ENCODE measurements at regions of chr21 and their contacts with region 1.

Region 1: DNA sequence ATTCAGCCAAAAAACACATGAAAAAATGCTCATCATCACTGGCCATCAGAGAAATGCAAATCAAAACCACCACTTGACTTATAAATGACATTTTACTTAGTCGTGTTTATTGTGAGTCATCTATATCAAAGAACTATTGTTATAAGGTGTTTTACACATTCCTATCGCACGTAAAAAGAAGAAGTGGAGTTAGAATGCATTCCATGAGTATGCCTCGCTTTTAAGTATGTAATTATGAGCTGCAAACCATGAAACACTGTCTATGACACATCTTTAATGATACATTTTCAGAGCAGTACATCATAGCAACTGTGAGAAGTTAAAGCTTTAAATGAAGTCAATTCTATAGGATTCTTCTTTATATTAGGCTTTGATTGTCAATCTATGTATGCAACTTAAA is 614.3 kb upstream of the ADAMTS5 start:
- DNase-seq: no peak
- ATAC-seq: no peak

Region 2: DNA sequence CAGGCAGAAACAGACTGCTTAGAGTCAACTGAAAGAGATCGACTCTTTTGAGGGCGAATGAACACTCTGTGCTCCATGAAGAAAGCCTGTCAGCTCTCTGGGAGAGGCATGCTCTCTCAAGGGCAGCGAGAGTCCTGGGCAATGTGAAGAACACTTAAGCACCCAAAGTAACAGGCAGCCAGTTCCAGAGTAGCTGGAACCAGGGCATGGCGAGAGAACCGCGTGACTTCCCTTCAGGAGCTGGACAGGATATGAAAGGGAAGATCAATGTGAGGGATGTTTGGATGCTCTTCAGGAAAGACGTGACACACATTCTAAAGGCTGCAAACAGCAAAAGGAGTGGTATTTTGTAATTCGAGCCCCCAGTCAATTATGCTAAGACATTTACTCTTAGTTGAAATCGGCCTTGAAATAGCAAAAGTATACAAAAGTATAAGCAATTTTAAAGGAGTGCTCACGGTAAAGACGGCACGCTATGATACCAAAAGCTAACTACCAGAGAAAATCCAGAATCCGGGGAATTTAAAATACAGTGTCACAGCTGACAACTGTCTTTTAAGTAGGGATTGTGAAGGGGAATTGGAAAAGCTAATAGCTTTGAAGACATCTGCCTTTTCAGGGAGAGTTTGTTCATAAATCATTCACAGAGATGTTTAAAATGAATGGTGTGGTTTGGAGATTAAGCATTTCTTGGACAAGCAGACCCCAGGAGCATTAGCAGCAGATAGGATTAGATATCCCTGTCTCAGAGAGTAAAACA is 635.1 kb before region 1 on chr21:
- intact Hi-C with region 1: no loop called
- DNase-seq: peak; percentile 53
- ATAC-seq: peak; percentile 93

Region 3: DNA sequence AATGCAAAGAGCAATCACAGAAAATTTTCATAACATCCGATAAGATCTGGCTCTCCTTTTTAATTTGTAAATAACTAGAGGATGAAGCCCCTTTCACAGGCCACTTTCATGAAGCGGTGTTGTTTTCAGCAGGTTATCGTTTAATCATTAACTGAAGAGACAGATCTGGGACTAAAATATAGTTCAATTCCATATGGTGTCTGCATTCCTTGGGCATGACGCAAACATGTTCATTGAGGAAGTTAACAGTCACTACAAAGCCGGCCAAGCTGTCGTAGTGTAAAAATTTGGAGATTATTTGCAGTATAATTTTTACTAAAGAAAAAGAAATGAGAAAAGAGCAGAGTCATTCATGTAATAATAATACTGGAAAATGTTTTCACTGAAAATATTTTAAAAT is 49.1 kb before region 1 on chr21:
- intact Hi-C with region 1: no loop called
- DNase-seq: no peak
- ATAC-seq: no peak

Region 4: DNA sequence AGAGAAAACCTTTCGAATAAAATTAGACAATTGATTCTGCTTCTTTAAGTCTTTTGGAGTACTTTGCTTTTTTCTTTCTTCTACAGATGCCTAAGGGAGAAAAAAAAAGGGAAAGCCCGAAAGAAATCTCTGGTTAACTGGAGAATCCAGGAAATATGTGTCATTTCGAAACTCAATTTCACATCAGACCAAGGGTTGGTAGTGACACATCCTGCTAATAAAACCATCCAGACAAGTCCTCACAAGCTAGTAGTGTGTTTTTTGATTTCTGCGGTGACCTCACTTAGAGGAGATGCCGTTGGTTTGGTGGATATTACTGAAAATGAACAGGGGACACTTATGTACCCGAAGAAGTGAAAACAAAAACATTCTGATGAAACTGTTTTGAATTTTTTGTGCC is 112.2 kb after region 1 on chr21:
- intact Hi-C with region 1: loop called (anchors 10 kb)
- DNase-seq: no peak
- ATAC-seq: no peak